ENCODE measurements at regions of chr12 and their contacts with region 1.

Region 1: GRCh38 chr12:62799126-62799736 is 135.7 kb downstream of the PPM1H start:
- DNase-seq: peak; percentile 10 to 73 (median 52)
- ATAC-seq: peak; percentile 93
- H3K4me3 ChIP-seq: no peak overlapping the region
- H3K4me3 Mint-ChIP-seq: no peak overlapping the region
- H3K27ac ChIP-seq: no peak overlapping the region
- H3K27ac Mint-ChIP-seq: no peak overlapping the region
- H3K4me1 ChIP-seq: no peaks in the 10 kb centered on the region
- H3K4me1 Mint-ChIP-seq: no peaks in the 10 kb centered on the region
- H3K27me3 ChIP-seq: no peaks in the 10 kb centered on the region
- H3K27me3 Mint-ChIP-seq: peaks cover 5% of the 10 kb centered on the region
- CTCF ChIP-seq: peak; percentile 89

Region 2: DNA sequence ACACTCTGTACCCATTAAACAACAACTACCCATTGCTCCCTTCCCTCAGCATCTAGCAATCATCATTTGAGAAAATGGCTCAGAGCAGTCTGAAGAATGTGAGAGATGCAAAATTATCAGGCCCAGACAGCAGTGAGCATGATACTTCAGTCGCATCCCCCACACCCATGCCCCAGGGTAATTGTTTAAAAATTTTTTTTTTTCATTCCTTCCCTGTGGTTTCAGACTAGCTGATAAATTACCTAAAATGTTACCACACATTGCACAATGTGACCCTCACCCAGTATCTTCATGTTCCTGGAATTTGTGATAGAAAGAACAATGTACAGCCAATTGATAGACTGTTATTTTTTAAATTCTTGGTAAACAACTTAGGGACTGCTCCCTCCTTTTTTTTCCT is 550.4 kb before region 1 on chr12:
- CTCF ChIA-PET with region 1: no interaction called
- POLR2A ChIA-PET with region 1: no interaction called
- intact Hi-C with region 1: loop called in 1 of 2 experiments (anchors 10 kb)
- DNase-seq: no peak
- ATAC-seq: no peak
- H3K4me3 ChIP-seq: no peak overlapping the region
- H3K4me3 Mint-ChIP-seq: no peak overlapping the region
- H3K27ac ChIP-seq: no peak overlapping the region
- H3K27ac Mint-ChIP-seq: no peak overlapping the region
- H3K4me1 ChIP-seq: peaks cover 17% of the 10 kb centered on the region
- H3K4me1 Mint-ChIP-seq: peaks cover 17% of the 10 kb centered on the region
- H3K27me3 ChIP-seq: no peaks in the 10 kb centered on the region
- H3K27me3 Mint-ChIP-seq: no peaks in the 10 kb centered on the region
- CTCF ChIP-seq: no peak

Region 3: DNA sequence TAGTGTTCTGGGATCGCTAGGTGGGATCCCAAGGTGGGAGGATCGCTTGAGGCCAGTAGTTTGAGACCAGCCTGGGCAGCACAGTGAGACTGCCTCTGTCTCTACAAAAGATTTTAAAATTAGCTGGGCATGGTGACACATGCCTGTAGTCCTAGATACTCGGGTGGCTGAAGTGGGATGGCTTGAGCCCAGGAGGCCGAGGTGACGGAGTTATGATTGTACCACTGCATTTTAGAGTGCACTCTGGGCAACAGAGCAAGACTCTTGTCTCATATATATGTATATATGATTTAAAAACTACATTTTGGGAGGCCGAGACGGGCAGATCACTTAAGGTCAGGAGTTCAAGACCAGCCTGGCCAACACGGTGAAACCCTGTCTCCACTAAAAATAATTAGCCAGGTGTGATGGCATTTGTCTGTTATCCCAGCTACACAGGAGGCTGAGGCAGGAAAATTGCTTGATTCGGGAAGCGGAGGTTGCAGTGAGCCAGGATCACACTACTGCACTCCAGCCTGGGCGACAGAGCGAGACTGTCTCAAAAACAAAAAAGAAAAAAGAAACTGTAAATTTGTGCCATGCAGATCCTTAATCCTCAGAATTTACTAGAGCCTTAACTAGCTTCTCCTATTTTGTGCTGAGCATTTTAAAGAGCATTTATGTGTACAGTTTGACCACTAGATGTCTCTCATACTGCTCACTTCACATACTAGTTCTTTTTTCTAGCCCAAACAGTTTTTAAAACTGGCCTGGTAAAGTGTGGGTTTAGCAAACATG is 217.8 kb before region 1 on chr12:
- CTCF ChIA-PET with region 1: interaction called, 211 read pairs
- POLR2A ChIA-PET with region 1: interaction called, 3 read pairs
- intact Hi-C with region 1: loop called (anchors 1 kb)
- DNase-seq: peak in 2 of 9 experiments; percentile 53 to 67
- ATAC-seq: peak; percentile 59
- H3K4me3 ChIP-seq: no peak overlapping the region
- H3K4me3 Mint-ChIP-seq: no peak overlapping the region
- H3K27ac ChIP-seq: no peak overlapping the region
- H3K27ac Mint-ChIP-seq: no peak overlapping the region
- H3K4me1 ChIP-seq: no peaks in the 10 kb centered on the region
- H3K4me1 Mint-ChIP-seq: no peaks in the 10 kb centered on the region
- H3K27me3 ChIP-seq: no peaks in the 10 kb centered on the region
- H3K27me3 Mint-ChIP-seq: no peaks in the 10 kb centered on the region
- CTCF ChIP-seq: peak; percentile 66

Region 4: DNA sequence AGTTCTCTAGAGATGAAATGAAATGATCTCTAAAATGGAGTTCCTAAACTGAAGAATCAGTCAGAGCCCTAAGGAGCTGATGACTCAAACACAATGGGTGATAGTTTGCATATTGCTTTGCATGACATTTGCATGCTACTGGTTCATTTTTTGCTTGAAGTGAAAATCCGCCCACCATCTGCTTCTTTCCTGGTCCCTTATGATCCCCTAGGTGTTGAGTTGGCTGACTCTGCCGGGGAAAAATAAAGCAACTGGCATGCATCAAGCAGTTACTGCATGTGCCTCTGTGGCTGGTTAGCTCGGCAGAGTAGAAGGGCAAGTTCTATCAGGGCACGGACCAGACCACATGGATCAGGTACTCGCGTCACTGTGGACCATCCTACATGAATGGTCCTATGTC is 15.3 kb before region 1 on chr12:
- CTCF ChIA-PET with region 1: interaction called, 23 read pairs
- POLR2A ChIA-PET with region 1: no interaction called
- intact Hi-C with region 1: no loop called
- DNase-seq: no peak
- ATAC-seq: no peak
- H3K4me3 ChIP-seq: no peak overlapping the region
- H3K4me3 Mint-ChIP-seq: no peak overlapping the region
- H3K27ac ChIP-seq: no peak overlapping the region
- H3K27ac Mint-ChIP-seq: no peak overlapping the region
- H3K4me1 ChIP-seq: no peaks in the 10 kb centered on the region
- H3K4me1 Mint-ChIP-seq: peaks cover 5% of the 10 kb centered on the region
- H3K27me3 ChIP-seq: no peaks in the 10 kb centered on the region
- H3K27me3 Mint-ChIP-seq: no peaks in the 10 kb centered on the region
- CTCF ChIP-seq: no peak

Region 5: GRCh38 chr12:62813031-62813829 is 14.0 kb after region 1 on chr12:
- CTCF ChIA-PET with region 1: interaction called, 35 read pairs
- POLR2A ChIA-PET with region 1: interaction called, 3 read pairs
- intact Hi-C with region 1: no loop called
- DNase-seq: peak in 5 of 9 experiments; percentile 7 to 51 (median 29)
- ATAC-seq: no peak
- H3K4me3 ChIP-seq: peak overlapping the region in 1 of 2 experiments; percentile 20
- H3K4me3 Mint-ChIP-seq: peak overlapping the region; percentile 61
- H3K27ac ChIP-seq: no peak overlapping the region
- H3K27ac Mint-ChIP-seq: no peak overlapping the region
- H3K4me1 ChIP-seq: peaks cover 6% of the 10 kb centered on the region
- H3K4me1 Mint-ChIP-seq: peaks cover 11% of the 10 kb centered on the region
- H3K27me3 ChIP-seq: no peaks in the 10 kb centered on the region
- H3K27me3 Mint-ChIP-seq: peaks cover 22% of the 10 kb centered on the region
- CTCF ChIP-seq: peak; percentile 32

Measured in CD8-positive, alpha-beta T cell (primary cell).